Activated T-helper 1 cell treated with anti-CD3 and anti-CD28 coated beads, Interleukin-12 subunit alpha, Interleukin-12 subunit beta, Interleukin-2, Interleukin-4 antibody, amounts not matched to agents 30 ng/mL and 10 ng/mL and 1 ng/mL, durations not matched to agents 14 hours and 24 hours and 36 hours (primary cell): ENCODE measurements at regions of chr7 and their contacts with region 1.

Region 1: DNA sequence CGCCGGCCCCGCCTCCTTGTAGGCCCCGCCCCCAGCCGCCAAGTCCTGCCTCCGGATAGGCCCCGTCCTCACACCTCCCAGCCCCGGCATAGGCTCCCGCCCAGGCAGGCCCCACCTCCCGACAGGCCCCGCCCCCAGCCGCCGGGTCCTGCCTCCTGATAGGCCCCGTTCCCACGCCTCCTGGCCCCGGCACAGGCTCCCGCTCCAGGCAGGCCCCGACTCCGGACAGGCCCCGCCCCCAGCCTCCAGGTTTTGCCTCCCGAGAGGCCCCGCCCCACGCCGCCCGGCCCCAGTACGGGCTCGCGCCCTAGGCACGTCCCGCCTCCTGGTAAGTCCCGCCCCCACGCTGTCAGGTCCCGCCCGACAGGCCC is 237 bp upstream of the MICALL2 start:
- DNase-seq: peak; percentile 96
- H3K4me3 Mint-ChIP-seq: peak overlapping the region; percentile 72
- H3K27ac Mint-ChIP-seq: no peak overlapping the region
- H3K4me1 Mint-ChIP-seq: no peaks in the 10 kb centered on the region
- H3K27me3 Mint-ChIP-seq: peaks cover 4% of the 10 kb centered on the region

Region 2: GRCh38 chr7:1368682-1369571 is 90.6 kb before region 1 on chr7:
- intact Hi-C with region 1: loop called (anchors 1 kb)
- DNase-seq: no peak
- H3K4me3 Mint-ChIP-seq: no peak overlapping the region
- H3K27ac Mint-ChIP-seq: no peak overlapping the region
- H3K4me1 Mint-ChIP-seq: peaks cover 6% of the 10 kb centered on the region
- H3K27me3 Mint-ChIP-seq: peaks cover 23% of the 10 kb centered on the region

Region 3: GRCh38 chr7:1432411-1433082 is 27.0 kb before region 1 on chr7:
- intact Hi-C with region 1: no loop called
- DNase-seq: peak; percentile 54
- H3K4me3 Mint-ChIP-seq: no peak overlapping the region
- H3K27ac Mint-ChIP-seq: no peak overlapping the region
- H3K4me1 Mint-ChIP-seq: peaks cover 5% of the 10 kb centered on the region
- H3K27me3 Mint-ChIP-seq: peaks cover 4% of the 10 kb centered on the region

Region 4: DNA sequence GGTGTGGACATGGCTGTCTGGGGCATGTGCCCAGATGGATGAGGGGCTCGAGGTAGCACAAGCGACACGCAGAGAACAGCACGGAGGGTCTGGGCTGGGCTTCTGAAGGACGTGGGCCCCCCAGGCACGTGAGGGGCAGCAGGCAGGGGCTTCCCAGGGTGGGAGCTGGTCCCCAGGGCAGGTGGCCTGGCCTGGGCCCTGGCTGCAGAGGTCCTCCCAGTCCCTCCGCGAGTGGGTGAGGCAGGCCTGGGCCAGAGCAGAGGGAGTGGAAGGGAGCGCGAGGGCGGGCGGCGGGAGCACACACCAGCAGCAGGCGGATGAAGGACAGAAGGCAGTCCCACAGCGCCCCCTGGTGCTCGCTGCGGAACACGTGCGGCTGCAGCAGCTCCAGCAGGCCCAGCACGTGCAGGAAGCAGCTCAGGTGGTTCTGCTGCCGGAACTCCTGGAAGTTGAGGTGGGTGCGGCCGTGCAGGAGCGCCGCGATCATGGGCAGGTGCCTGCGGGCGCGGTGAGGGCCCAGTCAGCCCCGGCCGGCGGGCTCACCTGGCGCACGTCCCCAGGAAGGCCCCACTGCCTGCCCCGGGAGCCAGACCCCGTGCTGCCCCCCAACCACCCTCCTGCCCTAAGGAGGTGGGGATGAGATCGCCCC is 14.5 kb after region 1 on chr7:
- intact Hi-C with region 1: loop called (anchors 1 kb)
- DNase-seq: peak; percentile 71
- H3K4me3 Mint-ChIP-seq: no peak overlapping the region
- H3K27ac Mint-ChIP-seq: no peak overlapping the region
- H3K4me1 Mint-ChIP-seq: no peaks in the 10 kb centered on the region
- H3K27me3 Mint-ChIP-seq: no peaks in the 10 kb centered on the region

Region 5: GRCh38 chr7:1503816-1504775 is 44.6 kb after region 1 on chr7 and contains the start of gene INTS1:
- intact Hi-C with region 1: loop called (anchors 1 kb)
- DNase-seq: peak; percentile 90
- H3K4me3 Mint-ChIP-seq: peak within 1 kb of the TSS; percentile 89
- H3K27ac Mint-ChIP-seq: peak within 1 kb of the TSS; percentile 85
- H3K4me1 Mint-ChIP-seq: peaks cover 31% of the 10 kb centered on the region
- H3K27me3 Mint-ChIP-seq: no peaks in the 10 kb centered on the region
- total RNA-seq, gene INTS1: 94.3 and 97.9 TPM in 2 replicates